Activated T-helper 1 cell treated with anti-CD3 and anti-CD28 coated beads, Interleukin-12 subunit alpha, Interleukin-12 subunit beta, Interleukin-2, Interleukin-4 antibody, amounts not matched to agents 30 ng/mL and 10 ng/mL and 1 ng/mL, durations not matched to agents 14 hours and 24 hours and 36 hours (primary cell): ENCODE measurements at regions of chr3 and their contacts with region 1.

Region 1: DNA sequence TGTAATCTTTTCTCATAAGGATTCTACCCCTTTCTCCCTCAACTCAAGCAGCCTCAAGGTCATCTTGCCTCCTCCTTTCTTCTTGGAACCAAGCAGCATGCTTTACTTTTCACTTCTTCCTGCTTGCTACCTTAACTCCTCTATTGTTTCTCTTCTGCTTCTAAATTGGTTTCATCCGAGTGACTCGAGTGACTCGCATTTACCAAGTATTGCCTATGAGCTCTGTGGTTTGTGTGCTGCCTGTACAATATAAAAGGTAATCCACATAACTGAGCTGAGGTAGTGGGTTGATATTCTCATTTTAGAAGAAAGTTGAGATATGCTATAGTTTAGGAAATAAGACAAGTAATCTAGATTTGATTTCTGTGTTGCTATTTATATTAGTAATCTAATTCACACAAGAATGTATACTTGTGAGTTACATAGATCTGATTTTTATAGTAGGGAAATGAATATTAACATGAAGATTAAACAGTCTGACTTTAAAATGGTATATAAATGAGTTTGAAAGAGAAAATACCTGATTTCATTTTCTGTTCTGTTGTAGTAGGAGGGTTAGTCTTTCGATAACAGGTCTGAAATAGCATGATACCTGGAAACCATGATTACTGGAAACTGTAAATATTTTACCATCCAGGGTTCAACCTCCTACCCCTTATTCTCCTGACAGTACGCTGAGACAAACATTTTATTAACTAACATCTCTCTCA is 5.5 kb downstream of the HHLA2 start:
- DNase-seq: no peak
- H3K4me3 Mint-ChIP-seq: peak overlapping the region; percentile 67
- H3K27ac Mint-ChIP-seq: peak overlapping the region; percentile 85
- H3K4me1 Mint-ChIP-seq: peaks cover 60% of the 10 kb centered on the region
- H3K27me3 Mint-ChIP-seq: no peaks in the 10 kb centered on the region

Region 2: DNA sequence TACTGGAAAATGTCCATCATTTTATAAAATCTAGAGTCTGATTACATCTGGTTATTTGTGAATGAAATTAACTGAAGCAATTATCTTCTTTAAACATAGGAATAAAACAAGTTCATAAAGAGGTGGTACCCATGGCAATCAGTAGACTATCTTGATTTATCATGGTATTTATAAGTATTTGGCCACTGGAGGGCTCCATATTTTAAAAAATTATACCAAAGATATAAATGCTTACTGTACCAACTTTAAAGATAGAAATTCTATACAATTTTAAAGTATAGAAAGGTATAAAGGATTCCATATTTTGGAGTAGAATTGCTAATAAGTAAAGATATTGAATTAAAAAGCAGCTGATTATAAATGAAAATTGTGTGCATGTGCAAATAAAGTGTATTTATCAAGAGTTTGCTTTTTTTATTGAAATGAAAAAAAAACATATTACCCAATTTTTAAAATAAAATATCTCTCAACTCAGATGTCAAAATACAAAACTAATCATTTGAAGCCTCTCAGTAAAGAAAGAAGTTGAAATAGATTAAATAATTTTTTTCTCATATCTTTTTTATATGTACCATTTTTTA is 673.8 kb before region 1 on chr3:
- intact Hi-C with region 1: no loop called
- DNase-seq: no peak
- H3K4me3 Mint-ChIP-seq: no peak overlapping the region
- H3K27ac Mint-ChIP-seq: no peak overlapping the region
- H3K4me1 Mint-ChIP-seq: peaks cover 12% of the 10 kb centered on the region
- H3K27me3 Mint-ChIP-seq: no peaks in the 10 kb centered on the region

Region 3: GRCh38 chr3:108062051-108062450 is 239.8 kb before region 1 on chr3:
- intact Hi-C with region 1: no loop called
- DNase-seq: no peak
- H3K4me3 Mint-ChIP-seq: no peak overlapping the region
- H3K27ac Mint-ChIP-seq: no peak overlapping the region
- H3K4me1 Mint-ChIP-seq: peaks cover 46% of the 10 kb centered on the region
- H3K27me3 Mint-ChIP-seq: no peaks in the 10 kb centered on the region

Region 4: GRCh38 chr3:108319428-108320082 is 17.7 kb after region 1 on chr3:
- intact Hi-C with region 1: loop called (anchors 2 kb)
- DNase-seq: no peak
- H3K4me3 Mint-ChIP-seq: no peak overlapping the region
- H3K27ac Mint-ChIP-seq: no peak overlapping the region
- H3K4me1 Mint-ChIP-seq: no peaks in the 10 kb centered on the region
- H3K27me3 Mint-ChIP-seq: no peaks in the 10 kb centered on the region

Region 5: GRCh38 chr3:108767253-108767652 is 465.4 kb after region 1 on chr3:
- intact Hi-C with region 1: no loop called
- DNase-seq: no peak
- H3K4me3 Mint-ChIP-seq: no peak overlapping the region
- H3K27ac Mint-ChIP-seq: no peak overlapping the region
- H3K4me1 Mint-ChIP-seq: peaks cover 4% of the 10 kb centered on the region
- H3K27me3 Mint-ChIP-seq: peaks cover 2% of the 10 kb centered on the region